ENCODE measurements at regions of chr17 and their contacts with region 1.

Region 1: GRCh38 chr17:27968206-27968732 is 74.2 kb upstream of the NLK start:
- DNase-seq: no peak
- H3K4me3 ChIP-seq: no peak overlapping the region
- CTCF ChIP-seq: no peak

Region 2: GRCh38 chr17:27879987-27880608 is 88.2 kb before region 1 on chr17:
- in situ Hi-C with region 1: loop called (anchors 5 kb)
- DNase-seq: peak; percentile 24
- H3K4me3 ChIP-seq: no peak overlapping the region
- CTCF ChIP-seq: peak; percentile 90

Region 3: GRCh38 chr17:27907976-27908558 is 60.2 kb before region 1 on chr17:
- in situ Hi-C with region 1: no loop called
- DNase-seq: no peak
- H3K4me3 ChIP-seq: no peak overlapping the region
- CTCF ChIP-seq: no peak

Measured in astrocyte of the cerebellum (primary cell).